ENCODE measurements at regions of chr17 and their contacts with region 1.

Region 1: GRCh38 chr17:58172369-58173071 is 5.7 kb downstream of the OR4D2 start:
- DNase-seq: peak; percentile 46
- ATAC-seq: peak; percentile 98
- H3K4me3 Mint-ChIP-seq: no peak overlapping the region
- H3K27ac Mint-ChIP-seq: no peak overlapping the region
- H3K4me1 Mint-ChIP-seq: no peaks in the 10 kb centered on the region
- H3K27me3 Mint-ChIP-seq: peaks cover 27% of the 10 kb centered on the region
- CTCF ChIP-seq: peak; percentile 40

Region 2: GRCh38 chr17:58121925-58122324 is 50.6 kb before region 1 on chr17:
- CTCF ChIA-PET with region 1: interaction called, 19 read pairs
- POLR2A ChIA-PET with region 1: no interaction called
- DNase-seq: peak; percentile 23
- ATAC-seq: peak; percentile 69; the same call in 1 of the 2 replicates
- H3K4me3 Mint-ChIP-seq: no peak overlapping the region
- H3K27ac Mint-ChIP-seq: no peak overlapping the region
- H3K4me1 Mint-ChIP-seq: no peaks in the 10 kb centered on the region
- H3K27me3 Mint-ChIP-seq: peaks cover 13% of the 10 kb centered on the region; the same call in 1 of the 2 replicates
- CTCF ChIP-seq: no peak

Region 3: DNA sequence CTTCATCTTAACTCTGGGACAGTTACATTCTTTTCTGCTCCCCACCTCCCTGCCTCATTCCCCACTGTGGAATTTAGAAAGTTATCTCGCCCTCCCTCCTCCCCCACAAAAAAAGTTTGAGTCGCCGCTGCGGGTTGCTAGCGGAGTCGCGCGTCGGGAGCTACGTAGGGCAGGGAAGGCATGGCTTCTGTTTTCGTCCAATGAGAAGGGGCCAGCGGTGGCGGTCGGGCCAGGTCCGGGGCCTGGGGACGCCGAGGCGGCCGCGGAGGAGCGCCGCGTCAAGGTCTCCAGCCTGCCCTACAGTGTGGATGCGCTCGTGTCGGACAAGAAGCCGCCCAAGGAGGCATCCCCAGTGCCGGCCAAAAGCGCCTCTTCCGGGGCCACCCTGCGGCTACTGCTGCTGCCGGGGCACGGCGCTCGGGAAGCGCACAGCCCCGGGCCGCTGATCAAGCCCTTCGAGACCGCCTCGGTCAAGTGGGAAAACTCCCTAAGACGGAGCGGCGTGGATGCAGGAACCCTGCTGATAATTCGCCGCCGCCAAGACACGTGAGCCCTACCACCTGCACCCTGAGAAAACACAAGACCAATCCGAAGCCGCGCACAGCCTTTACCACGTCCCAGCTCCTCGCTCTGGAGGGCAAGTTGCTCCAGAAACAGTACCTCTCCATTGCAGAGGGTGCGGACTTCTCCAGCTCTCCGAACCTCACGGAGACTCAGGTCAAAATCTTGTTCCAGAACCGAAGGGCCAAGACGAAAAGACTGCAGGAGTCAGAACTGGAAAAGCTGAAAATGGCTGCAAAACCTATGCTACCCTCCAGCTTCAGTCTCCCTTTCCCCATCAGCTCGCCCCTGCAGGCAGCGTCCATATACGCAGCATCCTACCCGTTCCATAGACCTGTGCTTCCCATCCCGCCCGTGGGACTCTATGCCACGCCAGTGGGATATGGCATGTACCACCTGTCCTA is 15.4 kb before region 1 on chr17:
- CTCF ChIA-PET with region 1: interaction called, 11 read pairs
- POLR2A ChIA-PET with region 1: no interaction called
- DNase-seq: peak; percentile 73
- ATAC-seq: peak; percentile 95
- H3K4me3 Mint-ChIP-seq: peak overlapping the region; percentile 91
- H3K27ac Mint-ChIP-seq: peak overlapping the region; percentile 25
- H3K4me1 Mint-ChIP-seq: peaks cover 6% of the 10 kb centered on the region; the same call in 1 of the 2 replicates
- H3K27me3 Mint-ChIP-seq: peaks cover 84% of the 10 kb centered on the region
- CTCF ChIP-seq: no peak

Region 4: GRCh38 chr17:58329035-58329809 is 156.7 kb after region 1 on chr17:
- CTCF ChIA-PET with region 1: no interaction called
- POLR2A ChIA-PET with region 1: no interaction called
- DNase-seq: peak; percentile 61
- ATAC-seq: peak; percentile 48
- H3K4me3 Mint-ChIP-seq: peak overlapping the region; percentile 41
- H3K27ac Mint-ChIP-seq: peak overlapping the region; percentile 44
- H3K4me1 Mint-ChIP-seq: peaks cover 57% of the 10 kb centered on the region
- H3K27me3 Mint-ChIP-seq: peaks cover 11% of the 10 kb centered on the region
- CTCF ChIP-seq: 0 out of 2 replicates have a peak, but pooled peaks have one; percentile 16

Region 5: DNA sequence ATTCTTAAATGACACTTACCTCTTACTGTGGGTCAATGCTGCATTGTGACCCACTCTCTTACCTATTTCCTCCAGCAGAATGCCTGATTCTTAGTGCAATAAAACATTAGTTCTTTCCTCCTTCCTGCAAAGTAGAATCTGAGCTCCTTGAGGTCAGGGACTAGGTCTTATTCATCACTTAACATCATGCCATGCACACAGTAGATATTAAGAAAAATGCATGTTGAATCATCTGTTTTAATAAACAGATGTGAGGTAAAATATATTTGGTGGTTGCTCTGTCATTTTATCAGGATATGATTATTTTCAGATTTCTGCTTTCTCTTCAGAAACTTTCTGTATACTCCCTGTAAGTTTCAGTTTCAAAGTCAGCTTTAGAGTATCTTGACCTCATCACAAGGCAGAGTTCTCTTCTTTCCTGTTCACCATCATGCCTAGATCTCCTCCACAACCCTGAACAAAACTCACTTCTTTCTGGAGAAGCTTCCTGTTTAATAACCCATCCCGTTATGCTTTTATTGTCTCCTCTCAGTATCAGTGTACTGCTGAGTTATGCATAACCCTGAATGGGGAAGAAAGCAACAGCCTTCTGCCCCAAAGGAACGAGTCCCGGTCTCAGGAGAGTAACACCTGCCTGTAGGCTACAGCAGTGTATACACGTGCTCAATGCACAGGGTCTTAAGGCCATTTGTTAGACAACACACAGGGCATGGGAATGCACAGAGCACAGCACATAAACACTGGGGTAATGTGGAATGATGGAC is 209.8 kb after region 1 on chr17:
- CTCF ChIA-PET with region 1: no interaction called
- POLR2A ChIA-PET with region 1: no interaction called
- DNase-seq: no peak
- ATAC-seq: no peak
- H3K4me3 Mint-ChIP-seq: no peak overlapping the region
- H3K27ac Mint-ChIP-seq: no peak overlapping the region
- H3K4me1 Mint-ChIP-seq: peaks cover 25% of the 10 kb centered on the region
- H3K27me3 Mint-ChIP-seq: no peaks in the 10 kb centered on the region
- CTCF ChIP-seq: no peak

Measured in WTC11 (cell line).